CD4-positive, alpha-beta T cell (primary cell): ENCODE measurements at regions of chr13 and their contacts with region 1.

Region 1: GRCh38 chr13:95191821-95192563 is 109.3 kb downstream of the ABCC4 start:
- DNase-seq: peak; percentile 12 to 75 (median 46)
- ATAC-seq: peak; percentile 70
- H3K4me3 ChIP-seq: no peak overlapping the region
- H3K4me3 Mint-ChIP-seq: no peak overlapping the region
- H3K27ac ChIP-seq: no peak overlapping the region
- H3K27ac Mint-ChIP-seq: peak overlapping the region; percentile 24
- H3K4me1 ChIP-seq: peaks cover 2% of the 10 kb centered on the region
- H3K4me1 Mint-ChIP-seq: peaks cover 17% of the 10 kb centered on the region
- H3K27me3 ChIP-seq: no peaks in the 10 kb centered on the region
- H3K27me3 Mint-ChIP-seq: no peaks in the 10 kb centered on the region
- CTCF ChIP-seq: peak; percentile 67

Region 2: DNA sequence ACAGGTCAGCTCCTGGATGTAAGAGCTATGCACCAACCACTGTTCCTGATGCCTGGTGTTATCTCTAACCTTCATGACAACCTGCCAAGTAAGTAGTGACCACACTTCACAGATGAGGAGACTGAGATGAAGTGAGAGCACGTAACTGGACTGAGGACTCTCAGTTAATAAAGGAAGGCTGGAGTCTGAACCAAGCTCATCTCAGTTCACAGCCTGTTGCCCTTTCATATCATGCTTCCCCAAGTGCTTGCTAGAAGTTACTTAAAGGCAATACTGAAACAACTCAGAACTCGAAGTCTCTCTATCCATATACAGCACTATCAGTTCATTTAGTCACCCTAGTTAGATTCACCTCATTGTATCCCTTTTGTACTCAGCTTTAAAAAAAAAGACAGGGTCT is 10.4 kb before region 1 on chr13:
- CTCF ChIA-PET with region 1: interaction called, 10 read pairs
- POLR2A ChIA-PET with region 1: no interaction called
- intact Hi-C with region 1: no loop called
- DNase-seq: no peak
- ATAC-seq: no peak
- H3K4me3 ChIP-seq: no peak overlapping the region
- H3K4me3 Mint-ChIP-seq: no peak overlapping the region
- H3K27ac ChIP-seq: no peak overlapping the region
- H3K27ac Mint-ChIP-seq: peak overlapping the region; percentile 93
- H3K4me1 ChIP-seq: peaks cover 52% of the 10 kb centered on the region
- H3K4me1 Mint-ChIP-seq: peaks cover 91% of the 10 kb centered on the region
- H3K27me3 ChIP-seq: no peaks in the 10 kb centered on the region
- H3K27me3 Mint-ChIP-seq: no peaks in the 10 kb centered on the region
- CTCF ChIP-seq: no peak

Region 3: GRCh38 chr13:95226932-95227695 is 35.1 kb after region 1 on chr13:
- CTCF ChIA-PET with region 1: no interaction called
- POLR2A ChIA-PET with region 1: no interaction called
- intact Hi-C with region 1: no loop called
- DNase-seq: peak in 1 of 14 experiments; percentile 12
- ATAC-seq: no peak
- H3K4me3 ChIP-seq: no peak overlapping the region
- H3K4me3 Mint-ChIP-seq: no peak overlapping the region
- H3K27ac ChIP-seq: no peak overlapping the region
- H3K27ac Mint-ChIP-seq: no peak overlapping the region
- H3K4me1 ChIP-seq: no peaks in the 10 kb centered on the region
- H3K4me1 Mint-ChIP-seq: peaks cover 11% of the 10 kb centered on the region
- H3K27me3 ChIP-seq: no peaks in the 10 kb centered on the region
- H3K27me3 Mint-ChIP-seq: no peaks in the 10 kb centered on the region
- CTCF ChIP-seq: no peak

Region 4: GRCh38 chr13:95378603-95379002 is 186.6 kb after region 1 on chr13:
- CTCF ChIA-PET with region 1: interaction called, 37 read pairs
- POLR2A ChIA-PET with region 1: interaction called, 9 read pairs
- intact Hi-C with region 1: loop called (anchors 1 kb)
- DNase-seq: no peak
- ATAC-seq: no peak
- H3K4me3 ChIP-seq: no peak overlapping the region
- H3K4me3 Mint-ChIP-seq: no peak overlapping the region
- H3K27ac ChIP-seq: no peak overlapping the region
- H3K27ac Mint-ChIP-seq: no peak overlapping the region
- H3K4me1 ChIP-seq: peaks cover 6% of the 10 kb centered on the region
- H3K4me1 Mint-ChIP-seq: peaks cover 6% of the 10 kb centered on the region
- H3K27me3 ChIP-seq: no peaks in the 10 kb centered on the region
- H3K27me3 Mint-ChIP-seq: peaks cover 6% of the 10 kb centered on the region
- CTCF ChIP-seq: no peak

Region 5: GRCh38 chr13:95403828-95404522 is 212.0 kb after region 1 on chr13:
- CTCF ChIA-PET with region 1: interaction called, 40 read pairs
- POLR2A ChIA-PET with region 1: interaction called, 4 read pairs
- intact Hi-C with region 1: loop called (anchors 1 kb)
- DNase-seq: peak; percentile 59 to 86 (median 72)
- ATAC-seq: peak; percentile 97
- H3K4me3 ChIP-seq: peak overlapping the region; percentile 62
- H3K4me3 Mint-ChIP-seq: peak overlapping the region; percentile 94
- H3K27ac ChIP-seq: no peak overlapping the region
- H3K27ac Mint-ChIP-seq: no peak overlapping the region
- H3K4me1 ChIP-seq: peaks cover 9% of the 10 kb centered on the region
- H3K4me1 Mint-ChIP-seq: peaks cover 10% of the 10 kb centered on the region
- H3K27me3 ChIP-seq: peaks cover 0 to 5% of the 10 kb centered on the region in 2 experiments
- H3K27me3 Mint-ChIP-seq: peaks cover 4% of the 10 kb centered on the region
- CTCF ChIP-seq: peak; percentile 94

Region 6: GRCh38 chr13:95480131-95480545 is 288.1 kb after region 1 on chr13:
- CTCF ChIA-PET with region 1: interaction called, 5 read pairs
- POLR2A ChIA-PET with region 1: no interaction called
- intact Hi-C with region 1: loop called in 1 of 2 experiments (anchors 2 kb)
- DNase-seq: peak in 3 of 14 experiments; percentile 10 to 59 (median 51)
- ATAC-seq: no peak
- H3K4me3 ChIP-seq: no peak overlapping the region
- H3K4me3 Mint-ChIP-seq: peak overlapping the region; percentile 25
- H3K27ac ChIP-seq: no peak overlapping the region
- H3K27ac Mint-ChIP-seq: no peak overlapping the region
- H3K4me1 ChIP-seq: peaks cover 7% of the 10 kb centered on the region
- H3K4me1 Mint-ChIP-seq: no peaks in the 10 kb centered on the region
- H3K27me3 ChIP-seq: no peaks in the 10 kb centered on the region
- H3K27me3 Mint-ChIP-seq: no peaks in the 10 kb centered on the region
- CTCF ChIP-seq: no peak

Region 7: DNA sequence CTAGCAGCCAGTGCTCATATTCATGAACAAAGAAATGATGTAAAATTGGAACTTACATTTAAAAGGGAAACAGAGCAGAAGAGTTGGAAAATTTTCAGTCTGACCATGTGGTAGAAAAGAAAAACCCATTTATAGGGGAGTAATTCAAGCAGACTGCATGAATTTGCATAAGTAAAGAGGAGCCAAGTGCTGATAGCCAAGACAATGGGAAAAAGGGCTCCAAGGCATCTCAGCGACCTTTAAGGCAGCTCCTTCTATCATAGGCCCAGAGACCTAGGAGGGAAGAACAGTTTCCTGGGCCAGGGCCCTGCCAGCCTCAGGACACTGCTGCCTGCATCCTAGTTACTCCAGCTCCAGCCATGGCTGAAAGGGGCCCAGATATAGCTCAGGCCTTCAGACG is 492.4 kb after region 1 on chr13:
- CTCF ChIA-PET with region 1: no interaction called
- POLR2A ChIA-PET with region 1: no interaction called
- intact Hi-C with region 1: loop called in 1 of 2 experiments (anchors 5 kb)
- DNase-seq: no peak
- ATAC-seq: no peak
- H3K4me3 ChIP-seq: no peak overlapping the region
- H3K4me3 Mint-ChIP-seq: no peak overlapping the region
- H3K27ac ChIP-seq: no peak overlapping the region
- H3K27ac Mint-ChIP-seq: no peak overlapping the region
- H3K4me1 ChIP-seq: peaks cover 14% of the 10 kb centered on the region
- H3K4me1 Mint-ChIP-seq: peaks cover 92% of the 10 kb centered on the region
- H3K27me3 ChIP-seq: no peaks in the 10 kb centered on the region
- H3K27me3 Mint-ChIP-seq: no peaks in the 10 kb centered on the region
- CTCF ChIP-seq: no peak

Region 8: GRCh38 chr13:95834134-95834765 is 642.3 kb after region 1 on chr13:
- CTCF ChIA-PET with region 1: interaction called, 3 read pairs
- POLR2A ChIA-PET with region 1: no interaction called
- intact Hi-C with region 1: loop called in 1 of 2 experiments (anchors 10 kb)
- DNase-seq: peak; percentile 24 to 82 (median 56)
- ATAC-seq: peak; percentile 73
- H3K4me3 ChIP-seq: no peak overlapping the region
- H3K4me3 Mint-ChIP-seq: no peak overlapping the region
- H3K27ac ChIP-seq: no peak overlapping the region
- H3K27ac Mint-ChIP-seq: no peak overlapping the region
- H3K4me1 ChIP-seq: no peaks in the 10 kb centered on the region
- H3K4me1 Mint-ChIP-seq: no peaks in the 10 kb centered on the region
- H3K27me3 ChIP-seq: peaks cover 3 to 12% of the 10 kb centered on the region in 2 experiments
- H3K27me3 Mint-ChIP-seq: peaks cover 39% of the 10 kb centered on the region
- CTCF ChIP-seq: peak; percentile 94